ENCODE measurements at regions of chr2 and their contacts with region 1.

Region 1: GRCh38 chr2:218876562-218877219 is 4.0 kb upstream of the WNT10A start:
- DNase-seq: peak; percentile 86
- ATAC-seq: peak; percentile 63
- H3K4me3 ChIP-seq: no peak overlapping the region
- H3K27ac ChIP-seq: no peak overlapping the region
- H3K4me1 ChIP-seq: no peaks in the 10 kb centered on the region
- H3K27me3 ChIP-seq: no peaks in the 10 kb centered on the region; the same call in 1 of the 2 replicates
- CTCF ChIP-seq: peak; percentile 97

Region 2: DNA sequence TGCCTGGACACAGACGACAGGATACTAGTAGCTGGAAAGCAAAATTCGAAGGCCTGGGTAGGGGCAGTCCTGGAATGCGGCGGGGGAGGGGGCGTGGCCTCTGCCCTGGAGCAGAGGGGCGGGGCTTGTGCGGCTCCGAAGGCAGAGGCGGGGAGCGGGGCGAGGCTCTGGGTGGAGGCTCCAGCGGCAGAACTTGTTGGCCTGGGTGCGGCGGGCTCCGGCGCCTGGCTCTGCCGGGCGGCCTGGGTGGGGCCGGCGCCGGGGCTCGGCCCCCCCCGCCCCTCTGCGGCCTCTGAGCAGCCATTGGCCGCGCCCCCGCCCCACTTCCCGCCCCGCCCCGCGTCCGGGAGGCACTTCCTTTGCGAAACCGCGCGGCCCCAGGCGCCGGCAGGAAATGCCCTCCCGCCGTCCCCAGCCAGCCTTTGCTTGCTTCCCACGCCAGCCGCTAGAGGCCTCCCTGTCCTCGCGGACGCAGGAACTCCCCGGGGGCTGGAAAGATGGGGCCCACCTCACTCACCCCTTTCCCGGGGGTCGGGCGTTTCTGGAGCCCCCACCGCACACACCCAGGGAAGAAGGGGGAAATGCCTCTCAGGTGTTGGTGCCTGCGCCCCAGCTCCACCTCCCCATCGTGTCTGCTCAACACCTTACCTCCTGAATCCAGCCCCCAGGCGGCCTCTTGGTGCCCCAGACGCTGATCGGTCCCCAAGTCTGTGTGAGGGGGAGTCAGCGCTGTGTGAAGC is 470.3 kb before region 1 on chr2:
- CTCF ChIA-PET with region 1: no interaction called
- POLR2A ChIA-PET with region 1: no interaction called
- intact Hi-C with region 1: no loop called
- DNase-seq: peak; percentile 96
- ATAC-seq: peak; percentile 87
- H3K4me3 ChIP-seq: peak overlapping the region; percentile 67
- H3K27ac ChIP-seq: peak overlapping the region; percentile 47
- H3K4me1 ChIP-seq: peaks cover 20% of the 10 kb centered on the region
- H3K27me3 ChIP-seq: no peaks in the 10 kb centered on the region
- CTCF ChIP-seq: peak; percentile 82

Region 3: DNA sequence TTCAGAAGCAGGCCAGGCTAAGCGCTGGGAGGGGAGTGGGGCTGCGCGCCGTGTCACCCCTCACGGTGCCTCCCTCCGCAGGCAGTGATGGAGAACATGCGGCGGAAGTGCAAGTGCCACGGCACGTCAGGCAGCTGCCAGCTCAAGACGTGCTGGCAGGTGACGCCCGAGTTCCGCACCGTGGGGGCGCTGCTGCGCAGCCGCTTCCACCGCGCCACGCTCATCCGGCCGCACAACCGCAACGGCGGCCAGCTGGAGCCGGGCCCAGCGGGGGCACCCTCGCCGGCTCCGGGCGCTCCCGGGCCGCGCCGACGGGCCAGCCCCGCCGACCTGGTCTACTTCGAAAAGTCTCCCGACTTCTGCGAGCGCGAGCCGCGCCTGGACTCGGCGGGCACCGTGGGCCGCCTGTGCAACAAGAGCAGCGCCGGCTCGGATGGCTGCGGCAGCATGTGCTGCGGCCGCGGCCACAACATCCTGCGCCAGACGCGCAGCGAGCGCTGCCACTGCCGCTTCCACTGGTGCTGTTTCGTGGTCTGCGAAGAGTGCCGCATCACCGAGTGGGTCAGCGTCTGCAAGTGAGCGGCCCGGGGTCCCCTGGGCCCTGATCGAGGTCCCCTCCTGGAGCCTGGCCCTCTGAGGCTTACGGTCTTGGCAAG is 16.1 kb after region 1 on chr2:
- CTCF ChIA-PET with region 1: interaction called, 71 read pairs
- POLR2A ChIA-PET with region 1: no interaction called
- intact Hi-C with region 1: loop called (anchors 1 kb)
- DNase-seq: peak; percentile 84
- ATAC-seq: peak; percentile 42
- H3K4me3 ChIP-seq: peak overlapping the region; percentile 69
- H3K27ac ChIP-seq: peak overlapping the region; percentile 85
- H3K4me1 ChIP-seq: peaks cover 54% of the 10 kb centered on the region
- H3K27me3 ChIP-seq: no peaks in the 10 kb centered on the region
- CTCF ChIP-seq: peak; percentile 63

Region 4: DNA sequence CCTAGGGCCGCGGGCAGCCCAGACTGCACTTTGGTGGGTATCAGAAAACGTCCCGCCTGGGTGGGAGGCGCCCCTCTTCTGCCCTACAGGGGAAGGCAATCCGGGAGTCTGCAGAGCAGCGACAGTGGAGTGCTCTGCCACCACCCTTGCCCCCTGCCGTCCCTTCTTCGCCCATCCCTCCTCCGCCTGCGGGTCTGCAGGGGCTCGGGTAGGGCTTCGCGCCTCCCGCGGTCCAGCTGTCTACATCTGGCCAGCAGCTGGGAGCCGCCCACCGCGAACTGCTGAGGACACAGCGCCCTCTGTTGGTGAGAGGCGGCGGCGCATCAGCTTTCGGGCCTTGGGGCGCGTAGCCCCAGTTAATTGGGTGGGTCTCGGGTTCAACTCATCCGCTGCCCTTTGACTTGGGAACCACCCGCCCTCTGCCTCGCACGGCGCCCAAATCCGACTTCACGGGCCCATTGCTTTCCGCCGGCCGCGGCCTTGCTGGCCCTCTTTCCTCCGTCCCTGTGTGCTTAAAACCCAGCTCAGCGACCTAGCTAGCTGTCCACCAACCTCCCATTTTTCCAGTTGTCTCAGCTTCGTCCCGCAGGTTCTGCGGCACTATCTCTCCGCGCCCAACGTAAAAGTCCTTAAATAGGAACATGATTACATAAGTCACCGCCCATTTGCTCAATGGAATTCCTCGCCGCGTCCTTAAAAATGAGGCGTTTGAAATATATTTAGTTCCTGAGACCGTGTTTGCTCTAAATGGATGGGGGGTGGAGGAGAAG is 21.6 kb after region 1 on chr2:
- CTCF ChIA-PET with region 1: interaction called, 71 read pairs
- POLR2A ChIA-PET with region 1: no interaction called
- intact Hi-C with region 1: loop called (anchors 1 kb)
- DNase-seq: peak; percentile 64
- ATAC-seq: peak; percentile 19
- H3K4me3 ChIP-seq: no peak overlapping the region
- H3K27ac ChIP-seq: no peak overlapping the region
- H3K4me1 ChIP-seq: peaks cover 47% of the 10 kb centered on the region
- H3K27me3 ChIP-seq: no peaks in the 10 kb centered on the region
- CTCF ChIP-seq: peak; percentile 93

Region 5: GRCh38 chr2:218979846-218980734 is 103.4 kb after region 1 on chr2:
- CTCF ChIA-PET with region 1: interaction called, 5 read pairs
- POLR2A ChIA-PET with region 1: no interaction called
- intact Hi-C with region 1: loop called (anchors 5 kb)
- DNase-seq: peak; percentile 89
- ATAC-seq: peak; percentile 93
- H3K4me3 ChIP-seq: peak overlapping the region; percentile 77
- H3K27ac ChIP-seq: no peak overlapping the region
- H3K4me1 ChIP-seq: no peaks in the 10 kb centered on the region
- H3K27me3 ChIP-seq: peaks cover 26% of the 10 kb centered on the region
- CTCF ChIP-seq: peak; percentile 98